Gastrocnemius medialis (tissue), 4 donors: ENCODE measurements at regions of chr6 and their contacts with region 1.

Region 1: GRCh38 chr6:96897383-96898240 is at the start of gene NDUFAF4:
- DNase-seq: peak; percentile 95 to 96
- ATAC-seq: peak; percentile 92 to 95
- H3K4me3 ChIP-seq: peak within 1 kb of the TSS; percentile 83 to 98 (median 91)
- H3K27ac ChIP-seq: peak within 1 kb of the TSS; percentile 92 to 97 (median 96)
- H3K4me1 ChIP-seq: peaks cover 31 to 33% of the 10 kb centered on the region in 2 donors
- H3K27me3 ChIP-seq: no peaks in the 10 kb centered on the region
- CTCF ChIP-seq: peak; percentile 93 to 98 (median 95)
- POLR2A ChIP-seq: peak; percentile 76 to 85
- total RNA-seq, gene NDUFAF4: 31.3 to 63.9 (median 45.8) TPM

Region 2: DNA sequence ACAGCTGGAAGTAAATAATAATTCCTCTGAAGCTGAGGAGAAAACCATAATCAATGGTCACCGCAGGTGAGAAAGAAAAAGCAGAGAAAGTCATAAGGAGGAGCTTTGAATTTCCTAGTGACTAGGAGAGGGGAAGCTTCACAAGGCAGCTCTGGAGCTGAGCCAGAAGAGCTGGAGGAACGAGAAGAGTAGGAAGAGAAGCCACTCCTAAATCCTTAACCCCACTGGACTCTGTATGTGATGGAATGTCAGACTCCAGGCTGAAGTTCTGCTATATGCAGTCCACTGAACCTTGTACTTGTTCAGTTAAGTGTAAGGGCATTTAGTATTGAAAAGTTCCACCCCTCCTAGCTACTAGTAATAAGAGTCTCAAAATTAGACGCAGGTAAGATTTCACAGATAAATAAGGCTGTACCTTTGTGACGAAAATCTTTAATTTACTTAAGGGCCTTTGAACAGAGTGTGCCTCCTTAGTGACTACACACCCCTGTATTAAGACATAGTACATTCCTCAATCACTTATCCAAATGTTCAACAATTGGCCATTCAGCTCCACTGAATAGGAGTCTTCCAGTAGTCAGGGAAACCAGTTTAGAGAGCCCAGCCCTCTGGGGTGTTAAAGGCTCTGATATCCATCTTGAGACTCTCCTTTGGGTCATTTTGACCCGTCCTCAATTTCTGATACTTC is 447.4 kb before region 1 on chr6:
- in situ Hi-C with region 1: no loop called
- intact Hi-C with region 1: no loop called
- DNase-seq: no peak
- ATAC-seq: no peak
- H3K4me3 ChIP-seq: no peak overlapping the region
- H3K27ac ChIP-seq: no peak overlapping the region
- H3K4me1 ChIP-seq: no peaks in the 10 kb centered on the region
- H3K27me3 ChIP-seq: no peaks in the 10 kb centered on the region
- CTCF ChIP-seq: no peak
- POLR2A ChIP-seq: no peak

Region 3: GRCh38 chr6:96521644-96522464 is 375.8 kb before region 1 on chr6 and contains the start of gene UFL1:
- in situ Hi-C with region 1: loop called in 3 of 4 experiments (anchors 10 to 25 kb)
- intact Hi-C with region 1: loop called (anchors 5 kb)
- DNase-seq: peak; percentile 90 to 92
- ATAC-seq: peak; percentile 99
- H3K4me3 ChIP-seq: peak within 1 kb of the TSS; percentile 85 to 96 (median 91)
- H3K27ac ChIP-seq: peak within 1 kb of the TSS; percentile 92 to 96 (median 94)
- H3K4me1 ChIP-seq: peaks cover 19 to 25% of the 10 kb centered on the region in 2 donors
- H3K27me3 ChIP-seq: no peaks in the 10 kb centered on the region
- CTCF ChIP-seq: peak in 2 of 5 experiments; percentile 19 to 29
- POLR2A ChIP-seq: peak; percentile 79 to 80
- total RNA-seq, gene UFL1: 25.2 to 38.2 (median 29.2) TPM

Region 4: DNA sequence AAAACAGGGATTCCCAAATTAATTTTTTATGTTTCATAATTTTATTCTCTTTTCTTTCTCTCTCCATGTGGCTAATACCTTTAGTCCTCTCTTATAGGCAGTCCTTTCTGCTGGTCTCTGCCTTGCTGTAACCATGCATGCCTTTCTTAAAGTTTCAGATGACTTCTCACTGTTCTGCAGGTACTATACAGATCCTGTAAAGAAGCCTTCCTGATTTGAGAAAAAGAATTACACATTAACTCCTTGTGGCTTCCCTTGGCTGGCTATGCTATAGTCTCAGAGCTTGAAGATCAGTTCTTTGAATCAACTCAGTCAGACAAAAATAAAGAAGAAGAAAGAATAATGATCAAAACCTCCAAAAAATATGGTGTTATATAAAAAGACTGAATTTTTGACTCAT is 53.1 kb before region 1 on chr6:
- in situ Hi-C with region 1: no loop called
- intact Hi-C with region 1: no loop called
- DNase-seq: no peak
- ATAC-seq: no peak
- H3K4me3 ChIP-seq: no peak overlapping the region
- H3K27ac ChIP-seq: no peak overlapping the region
- H3K4me1 ChIP-seq: no peaks in the 10 kb centered on the region
- H3K27me3 ChIP-seq: no peaks in the 10 kb centered on the region
- CTCF ChIP-seq: no peak
- POLR2A ChIP-seq: no peak

Region 5: GRCh38 chr6:96923871-96924493 is 26.4 kb after region 1 on chr6:
- in situ Hi-C with region 1: no loop called
- intact Hi-C with region 1: loop called (anchors 1 kb)
- DNase-seq: no peak
- ATAC-seq: peak; percentile 72 to 80
- H3K4me3 ChIP-seq: peak overlapping the region; percentile 55 to 79 (median 70)
- H3K27ac ChIP-seq: peak overlapping the region; percentile 78 to 90 (median 82)
- H3K4me1 ChIP-seq: no peaks in the 10 kb centered on the region
- H3K27me3 ChIP-seq: no peaks in the 10 kb centered on the region
- CTCF ChIP-seq: no peak
- POLR2A ChIP-seq: peak in 1 of 2 donors; percentile 6

Region 6: GRCh38 chr6:96967957-96968871 is 70.6 kb after region 1 on chr6:
- in situ Hi-C with region 1: no loop called
- intact Hi-C with region 1: no loop called
- DNase-seq: no peak
- ATAC-seq: no peak
- H3K4me3 ChIP-seq: no peak overlapping the region
- H3K27ac ChIP-seq: no peak overlapping the region
- H3K4me1 ChIP-seq: no peaks in the 10 kb centered on the region
- H3K27me3 ChIP-seq: no peaks in the 10 kb centered on the region
- CTCF ChIP-seq: no peak
- POLR2A ChIP-seq: no peak

Region 7: GRCh38 chr6:97064578-97064977 is 167.0 kb after region 1 on chr6:
- in situ Hi-C with region 1: loop called in 3 of 4 experiments (anchors 5 to 10 kb)
- intact Hi-C with region 1: loop called (anchors 1 kb)
- DNase-seq: no peak
- ATAC-seq: no peak
- H3K4me3 ChIP-seq: no peak overlapping the region
- H3K27ac ChIP-seq: no peak overlapping the region
- H3K4me1 ChIP-seq: no peaks in the 10 kb centered on the region
- H3K27me3 ChIP-seq: no peaks in the 10 kb centered on the region
- CTCF ChIP-seq: no peak
- POLR2A ChIP-seq: no peak

Region 8: DNA sequence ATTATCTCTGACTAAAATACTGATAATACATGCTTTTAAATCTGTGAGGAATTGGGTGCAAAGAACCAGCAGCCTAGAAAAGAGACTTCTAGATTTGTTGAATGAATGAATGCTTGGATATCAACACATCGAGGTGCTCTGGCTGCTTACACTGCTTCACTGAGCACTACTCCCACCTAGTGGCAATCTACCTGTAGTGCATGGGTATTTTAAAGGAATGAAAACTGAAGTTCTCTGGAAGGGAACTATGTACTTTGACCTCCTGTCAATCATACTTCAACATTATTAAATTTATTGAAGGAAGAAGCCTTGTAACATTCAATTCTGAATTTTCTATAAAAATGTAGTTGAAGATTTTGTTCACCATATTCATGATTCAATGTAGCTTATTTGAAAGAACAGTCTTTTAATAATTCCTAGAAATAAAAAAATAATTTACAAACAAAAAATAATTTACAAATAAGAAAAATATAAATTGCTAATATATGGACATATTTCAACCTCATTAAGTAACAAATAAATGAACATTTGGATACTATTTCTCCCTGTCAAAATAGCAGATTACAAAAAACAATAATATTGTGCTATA is 496.6 kb after region 1 on chr6:
- in situ Hi-C with region 1: loop called in 1 of 4 experiments (anchors 25 kb)
- intact Hi-C with region 1: loop called (anchors 2 kb)
- DNase-seq: peak in 1 of 2 donors; percentile 8
- ATAC-seq: peak; percentile 60 to 63
- H3K4me3 ChIP-seq: no peak overlapping the region
- H3K27ac ChIP-seq: no peak overlapping the region
- H3K4me1 ChIP-seq: no peaks in the 10 kb centered on the region
- H3K27me3 ChIP-seq: no peaks in the 10 kb centered on the region
- CTCF ChIP-seq: peak; percentile 65 to 88 (median 82)
- POLR2A ChIP-seq: no peak